Left ventricle myocardium superior (tissue), 1 donor: ENCODE measurements at regions of chr17 and their contacts with region 1.

Region 1: DNA sequence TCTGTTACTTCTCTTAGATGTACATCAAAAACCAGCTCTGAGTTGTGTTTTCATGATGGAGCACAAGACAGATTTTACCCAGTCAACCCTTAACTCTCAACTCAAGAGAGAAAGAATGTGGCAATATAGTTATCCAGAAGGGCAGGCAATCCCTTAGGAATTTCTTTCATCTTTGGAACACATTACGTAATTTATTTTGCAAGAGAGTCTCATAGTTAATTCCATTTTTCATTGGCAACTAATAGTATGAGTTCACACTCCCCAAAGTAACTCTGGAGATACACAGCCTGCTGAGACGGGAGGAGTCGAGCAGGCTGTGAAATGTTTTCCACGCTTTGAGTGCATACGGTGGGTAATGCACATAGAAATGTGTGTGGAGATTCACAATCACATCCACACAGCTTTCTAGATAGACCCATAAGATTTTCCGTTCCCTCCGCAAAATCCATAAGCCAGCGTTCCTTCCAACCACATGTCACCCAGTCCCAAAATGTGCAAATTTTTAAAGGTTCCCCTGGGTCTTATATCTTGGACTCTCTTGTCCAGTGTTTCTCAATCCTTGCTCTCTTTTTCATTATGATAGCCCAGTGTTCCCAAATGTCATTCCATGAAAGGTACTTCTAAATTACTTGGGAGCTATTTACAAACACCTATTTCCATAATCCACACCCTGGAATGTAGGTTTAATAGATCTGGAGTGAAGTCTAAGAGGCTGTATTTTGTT is 8.4 kb upstream of the CDRT4 start:
- DNase-seq: no peak
- ATAC-seq: peak; percentile 88

Region 2: DNA sequence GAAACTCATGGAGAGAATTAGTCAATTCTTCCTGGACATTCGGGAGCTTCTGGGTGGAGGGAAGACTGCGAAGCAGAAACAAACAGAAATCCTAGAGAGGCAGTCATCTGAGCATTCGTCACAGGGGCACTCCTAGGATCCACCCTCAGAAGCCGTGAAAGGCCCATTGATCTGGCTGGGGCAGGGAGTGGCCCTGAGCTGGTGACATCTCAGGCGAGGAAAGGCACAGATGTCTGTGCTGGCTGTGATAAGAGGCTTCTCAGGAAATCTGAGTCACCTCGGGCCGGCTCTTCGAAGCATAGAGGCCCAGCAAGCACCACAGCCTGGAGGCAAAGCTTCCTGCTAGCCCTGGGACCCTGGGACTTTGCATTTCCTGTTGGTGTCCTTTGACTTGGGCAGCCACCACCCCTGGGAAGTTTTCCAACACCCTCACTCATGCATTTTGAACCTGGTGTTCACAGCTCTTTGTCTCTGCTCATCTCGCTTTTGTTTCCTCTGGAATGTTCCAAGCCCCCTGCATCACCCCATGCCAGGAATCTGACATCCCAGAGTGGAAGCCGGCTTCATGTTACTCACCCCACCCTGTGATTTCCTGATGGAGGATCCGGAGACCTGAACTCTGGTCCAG is 15.0 kb after region 1 on chr17:
- intact Hi-C with region 1: loop called (anchors 1 kb)
- DNase-seq: peak; percentile 70
- ATAC-seq: peak; percentile 95